Panc1 (cell line): ENCODE measurements at regions of chr17 and their contacts with region 1.

Region 1: DNA sequence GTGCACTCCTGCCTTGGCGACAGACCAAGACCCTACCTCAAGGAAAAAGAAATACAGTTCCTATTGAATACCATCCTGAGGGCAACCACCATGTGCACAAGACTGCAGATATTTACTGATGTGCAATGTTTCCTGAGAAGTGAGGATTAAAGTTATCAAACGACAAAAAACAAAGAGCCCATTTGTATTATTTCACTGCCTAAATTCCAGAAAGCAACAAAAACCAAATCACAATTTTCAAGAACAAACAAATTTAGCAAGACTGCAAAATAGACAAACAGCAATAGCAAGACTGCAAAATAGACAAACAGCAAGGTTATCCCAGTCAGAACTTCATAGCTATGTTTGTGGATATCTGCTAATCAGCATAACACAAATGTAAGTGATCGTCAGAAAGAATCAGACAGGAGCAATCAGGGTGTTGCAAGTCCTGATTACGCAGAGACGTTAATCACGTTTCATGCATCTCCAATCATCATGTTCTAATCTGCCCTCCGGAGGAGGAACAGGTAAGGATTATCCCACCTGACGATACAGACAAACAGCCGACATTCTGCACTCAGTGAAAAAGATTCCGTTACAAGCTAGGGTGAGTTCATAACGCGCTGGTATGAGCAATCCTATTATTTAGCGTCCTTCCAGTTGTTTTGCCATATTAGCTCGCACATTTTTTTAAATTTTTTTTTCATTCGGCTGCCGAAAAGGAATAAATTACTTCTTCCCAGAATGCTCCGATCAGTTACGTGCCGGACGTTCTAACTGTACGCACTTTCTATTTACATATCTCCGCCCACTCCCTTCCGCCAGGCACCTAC is 2.9 kb downstream of the TMEM107 start:
- DNase-seq: peak; percentile 99
- ATAC-seq: peak; percentile 83
- H3K4me3 ChIP-seq: peak overlapping the region; percentile 45 to 67
- H3K27ac ChIP-seq: peak overlapping the region; percentile 96
- H3K4me1 ChIP-seq: peaks cover 18% of the 10 kb centered on the region
- H3K27me3 ChIP-seq: no peaks in the 10 kb centered on the region
- CTCF ChIP-seq: no peak

Region 2: GRCh38 chr17:8156246-8156992 is 16.8 kb before region 1 on chr17:
- CTCF ChIA-PET with region 1: no interaction called
- POLR2A ChIA-PET with region 1: interaction called, 12 read pairs
- in situ Hi-C with region 1: no loop called
- intact Hi-C with region 1: no loop called
- DNase-seq: peak; percentile 99
- ATAC-seq: peak; percentile 83
- H3K4me3 ChIP-seq: peak overlapping the region; percentile 71 to 73
- H3K27ac ChIP-seq: peak overlapping the region; percentile 89
- H3K4me1 ChIP-seq: peaks cover 40% of the 10 kb centered on the region
- H3K27me3 ChIP-seq: no peaks in the 10 kb centered on the region
- CTCF ChIP-seq: no peak

Region 3: GRCh38 chr17:8916466-8916865 is 743.2 kb after region 1 on chr17:
- CTCF ChIA-PET with region 1: no interaction called
- POLR2A ChIA-PET with region 1: no interaction called
- in situ Hi-C with region 1: no loop called
- intact Hi-C with region 1: no loop called
- DNase-seq: no peak
- ATAC-seq: no peak
- H3K4me3 ChIP-seq: no peak overlapping the region
- H3K27ac ChIP-seq: no peak overlapping the region
- H3K4me1 ChIP-seq: no peaks in the 10 kb centered on the region
- H3K27me3 ChIP-seq: no peaks in the 10 kb centered on the region
- CTCF ChIP-seq: no peak